IMR-90 (cell line): ENCODE measurements at regions of chr7 and their contacts with region 1.

Region 1: GRCh38 chr7:156232931-156233705 is 407.5 kb upstream of the RNF32 start:
- DNase-seq: no peak
- ATAC-seq: no peak
- H3K4me3 ChIP-seq: no peak overlapping the region
- H3K27ac ChIP-seq: no peak overlapping the region
- H3K4me1 ChIP-seq: no peaks in the 10 kb centered on the region
- H3K27me3 ChIP-seq: no peaks in the 10 kb centered on the region
- CTCF ChIP-seq: no peak
- POLR2A ChIP-seq: no peak
- RAD21 ChIP-seq: no peak

Region 2: DNA sequence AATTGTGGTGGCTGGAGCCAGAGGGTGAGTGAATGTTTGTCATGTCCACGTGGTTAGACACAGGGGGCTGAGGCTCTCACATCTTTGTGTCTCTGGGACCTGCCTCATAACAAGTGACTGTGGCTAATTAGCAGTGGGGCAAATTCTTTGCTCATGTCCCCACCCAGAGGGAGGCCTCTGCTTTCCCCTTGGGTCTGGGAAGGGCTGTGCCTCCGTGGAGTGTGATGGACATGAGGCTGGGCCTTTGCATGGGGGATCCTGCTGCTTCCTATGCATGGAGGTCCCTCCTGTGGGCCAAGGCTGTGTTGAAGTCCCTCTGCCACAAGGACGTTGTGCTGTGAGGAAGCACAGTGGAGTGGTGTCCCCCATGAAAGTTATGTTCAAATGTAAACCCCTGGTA is 93.5 kb before region 1 on chr7:
- CTCF ChIA-PET with region 1: no interaction called
- POLR2A ChIA-PET with region 1: no interaction called
- dilution Hi-C with region 1: no loop called
- in situ Hi-C with region 1: no loop called
- intact Hi-C with region 1: loop called (anchors 5 kb)
- DNase-seq: no peak
- ATAC-seq: no peak
- H3K4me3 ChIP-seq: no peak overlapping the region
- H3K27ac ChIP-seq: no peak overlapping the region
- H3K4me1 ChIP-seq: no peaks in the 10 kb centered on the region
- H3K27me3 ChIP-seq: no peaks in the 10 kb centered on the region
- CTCF ChIP-seq: no peak
- POLR2A ChIP-seq: no peak
- RAD21 ChIP-seq: no peak

Region 3: DNA sequence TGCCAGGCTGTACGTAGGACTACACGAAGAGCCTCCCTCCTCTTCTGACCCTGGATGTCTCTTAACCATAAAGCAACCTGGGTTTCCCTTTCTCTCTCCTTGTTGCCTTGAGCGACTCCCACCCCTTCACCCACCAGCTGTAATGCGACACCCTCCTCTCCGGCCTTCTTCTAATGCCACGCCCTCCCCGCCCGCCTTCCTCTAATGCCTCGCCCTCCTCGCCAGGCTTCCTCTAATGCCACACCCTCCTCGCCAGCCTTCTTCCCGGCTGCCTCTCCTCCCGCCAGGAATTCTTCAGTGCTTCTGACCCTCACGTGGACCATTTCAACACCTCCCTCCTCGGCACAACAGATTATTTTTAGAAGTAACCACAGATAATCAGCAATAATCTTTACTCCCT is 72.3 kb before region 1 on chr7:
- CTCF ChIA-PET with region 1: no interaction called
- POLR2A ChIA-PET with region 1: no interaction called
- dilution Hi-C with region 1: no loop called
- in situ Hi-C with region 1: no loop called
- intact Hi-C with region 1: no loop called
- DNase-seq: no peak
- ATAC-seq: no peak
- H3K4me3 ChIP-seq: no peak overlapping the region
- H3K27ac ChIP-seq: no peak overlapping the region
- H3K4me1 ChIP-seq: no peaks in the 10 kb centered on the region
- H3K27me3 ChIP-seq: no peaks in the 10 kb centered on the region
- CTCF ChIP-seq: no peak
- POLR2A ChIP-seq: no peak
- RAD21 ChIP-seq: no peak

Region 4: DNA sequence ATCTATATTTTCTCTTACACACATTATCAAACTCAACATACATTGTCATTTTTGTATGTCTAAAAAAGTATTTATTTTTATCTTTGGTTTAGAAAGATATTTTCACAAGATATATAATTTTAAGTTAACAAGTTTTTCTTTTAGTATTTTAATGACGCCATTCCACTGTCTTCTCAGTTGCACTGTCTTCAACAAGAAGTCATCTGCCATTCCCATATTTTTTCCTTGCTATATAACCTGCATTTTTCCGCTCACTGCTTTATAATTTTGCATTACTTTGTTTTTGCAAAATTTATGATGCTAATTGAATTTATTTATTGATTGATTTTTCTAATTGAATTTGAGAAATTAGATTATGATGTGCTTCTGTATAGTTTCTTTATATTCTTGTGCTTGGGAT is 49.7 kb after region 1 on chr7:
- CTCF ChIA-PET with region 1: no interaction called
- POLR2A ChIA-PET with region 1: no interaction called
- dilution Hi-C with region 1: no loop called
- in situ Hi-C with region 1: no loop called
- intact Hi-C with region 1: no loop called
- DNase-seq: no peak
- ATAC-seq: no peak
- H3K4me3 ChIP-seq: no peak overlapping the region
- H3K27ac ChIP-seq: no peak overlapping the region
- H3K4me1 ChIP-seq: no peaks in the 10 kb centered on the region
- H3K27me3 ChIP-seq: no peaks in the 10 kb centered on the region
- CTCF ChIP-seq: no peak
- POLR2A ChIP-seq: no peak
- RAD21 ChIP-seq: no peak